ENCODE measurements at regions of chr13 and their contacts with region 1.

Region 1: DNA sequence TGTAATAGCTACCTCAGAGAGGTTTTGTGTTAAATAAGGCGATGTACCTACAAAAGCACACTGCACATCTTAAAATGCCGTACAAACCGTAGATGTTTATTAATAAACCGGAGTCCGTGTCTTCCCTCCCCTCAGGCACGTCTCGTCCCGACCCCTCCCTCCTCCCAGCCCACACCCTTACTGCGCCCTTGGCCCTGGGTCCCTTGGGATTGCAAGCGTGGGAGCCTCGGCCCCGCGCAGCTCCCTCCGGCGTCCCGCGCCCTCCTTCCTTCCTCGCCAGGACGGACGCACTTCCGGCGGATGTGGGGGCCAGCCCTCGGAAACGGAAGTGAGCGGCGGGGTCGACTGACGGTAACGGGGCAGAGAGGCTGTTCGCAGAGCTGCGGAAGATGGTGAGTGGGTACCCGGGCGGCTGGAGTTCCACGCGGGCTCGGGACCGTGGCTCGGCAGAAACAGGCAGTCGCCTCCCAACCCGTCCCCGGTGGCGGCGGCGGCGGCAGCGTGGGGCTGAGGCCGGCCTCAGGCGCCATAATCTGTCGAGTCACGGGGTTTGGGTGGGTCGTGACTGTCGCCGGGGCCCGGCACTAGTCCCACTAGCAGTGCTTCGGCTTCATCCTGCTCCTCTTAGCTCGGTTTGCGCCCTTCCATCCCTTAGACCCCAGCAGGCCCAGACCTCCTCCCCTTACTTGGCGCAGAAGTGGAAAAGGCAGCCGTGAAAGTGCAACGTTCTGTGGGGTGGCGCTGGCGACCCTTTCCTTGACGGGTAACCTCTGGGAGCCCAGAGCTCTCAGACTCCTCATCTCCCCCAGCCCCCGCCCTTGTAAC is at the start of gene POMP:
- DNase-seq: peak; percentile 98
- ATAC-seq: peak; percentile 96
- total RNA-seq, gene POMP: 113 TPM

Region 2: GRCh38 chr13:28251466-28251865 is 407.5 kb before region 1 on chr13:
- intact Hi-C with region 1: no loop called
- DNase-seq: no peak
- ATAC-seq: no peak

Region 3: GRCh38 chr13:28324181-28324789 is 334.7 kb before region 1 on chr13:
- intact Hi-C with region 1: loop called (anchors 5 kb)
- DNase-seq: no peak
- ATAC-seq: peak; percentile 74

Region 4: DNA sequence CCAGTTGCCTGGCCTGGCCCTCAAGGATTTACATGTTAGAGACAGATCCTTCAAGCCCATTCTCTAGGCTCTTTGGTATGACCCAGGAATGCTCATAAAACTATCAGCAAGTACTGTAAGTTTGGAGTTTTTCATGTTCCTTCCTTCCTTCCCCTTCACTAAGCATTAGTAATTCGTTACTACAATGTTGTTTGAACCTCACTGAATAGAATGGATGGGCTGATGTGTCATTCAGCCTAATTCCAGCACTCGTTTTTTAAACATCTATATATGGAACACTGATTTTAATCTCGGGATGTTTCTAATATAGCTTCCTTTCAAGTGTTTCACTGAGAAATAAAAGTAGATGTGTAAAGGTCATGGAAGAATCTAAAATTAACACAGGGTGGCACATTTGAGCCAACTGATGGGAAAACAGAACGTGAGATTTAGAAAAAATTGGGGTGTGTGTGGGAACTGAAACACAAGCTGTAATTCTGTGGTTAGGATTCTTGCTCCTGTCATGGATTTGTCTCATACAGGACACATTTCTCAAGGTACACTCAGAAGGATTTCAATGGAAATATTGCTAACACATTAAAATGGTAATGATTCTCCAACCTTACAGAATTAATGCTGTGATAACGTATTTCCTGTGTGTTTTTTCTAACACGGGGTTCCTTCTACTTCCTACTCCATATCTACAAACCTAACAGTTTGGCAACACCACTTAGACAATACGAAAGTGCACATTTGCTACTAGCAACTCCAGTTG is 257.5 kb before region 1 on chr13:
- intact Hi-C with region 1: loop called (anchors 10 kb)
- DNase-seq: no peak
- ATAC-seq: no peak

Region 5: GRCh38 chr13:28494776-28495537 is 164.1 kb before region 1 on chr13 and contains the start of gene FLT1:
- intact Hi-C with region 1: loop called (anchors 2 kb)
- DNase-seq: peak; percentile 79
- ATAC-seq: peak; percentile 69
- total RNA-seq, gene FLT1: 41.0 TPM

Region 6: DNA sequence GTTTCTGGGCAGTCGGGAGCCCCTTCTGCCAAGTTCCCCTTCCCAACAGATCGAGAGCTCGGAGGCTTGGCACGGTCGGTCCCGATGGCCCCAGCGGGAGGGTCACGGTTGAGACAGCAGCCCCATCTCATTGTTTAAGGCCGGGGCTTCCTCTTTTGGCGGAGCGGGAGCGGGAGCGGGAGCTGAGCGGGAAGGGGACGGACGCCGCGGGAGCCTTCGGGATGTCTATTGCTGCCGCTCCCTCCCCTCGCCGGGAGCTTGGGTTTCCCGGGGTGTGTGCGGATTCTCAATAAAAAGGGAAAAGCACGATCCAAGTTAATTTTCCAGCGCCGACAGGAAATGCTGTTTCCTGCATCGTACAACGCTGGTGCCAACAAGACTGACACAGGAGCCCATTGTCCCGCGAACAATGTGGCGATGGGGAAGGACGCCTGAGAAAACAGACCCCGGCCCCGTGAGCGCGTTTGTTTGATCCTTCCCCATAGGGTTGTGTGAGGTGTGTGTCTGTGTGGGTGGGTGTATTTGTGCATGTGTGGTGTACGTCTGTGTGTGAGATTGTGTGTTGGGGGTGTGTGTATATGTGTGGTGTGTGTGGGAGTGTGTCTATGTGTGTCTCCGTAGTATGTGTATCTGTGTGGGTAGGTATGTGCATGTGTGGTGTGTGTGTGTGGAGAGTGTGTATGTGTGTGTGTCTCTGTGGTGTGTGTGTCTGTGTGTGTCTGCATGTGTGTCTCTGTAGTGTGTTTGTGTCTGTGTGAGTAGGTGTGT is 127.7 kb before region 1 on chr13:
- intact Hi-C with region 1: loop called (anchors 2 kb)
- DNase-seq: peak; percentile 75
- ATAC-seq: peak; percentile 35

Region 7: GRCh38 chr13:28718543-28719226 is 59.7 kb after region 1 on chr13 and contains the start of gene SLC46A3:
- intact Hi-C with region 1: loop called (anchors 5 kb)
- DNase-seq: peak; percentile 99
- ATAC-seq: peak; percentile 99
- total RNA-seq, gene SLC46A3: 17.4 TPM